ENCODE measurements at regions of chr12 and their contacts with region 1.

Region 1: GRCh38 chr12:22046090-22046967 is at the start of gene CMAS:
- DNase-seq: peak; percentile 53 to 65
- ATAC-seq: peak; percentile 88 to 92
- H3K4me3 ChIP-seq: peak within 1 kb of the TSS; percentile 94 to 100 (median 97)
- H3K27ac ChIP-seq: peak within 1 kb of the TSS; percentile 93 to 97 (median 94)
- H3K4me1 ChIP-seq: peaks cover 2 to 17% of the 10 kb centered on the region in 2 donors
- H3K27me3 ChIP-seq: no peaks in the 10 kb centered on the region
- CTCF ChIP-seq: no peak
- POLR2A ChIP-seq: peak; percentile 60 to 61
- total RNA-seq, gene CMAS: 28.2 to 33.4 (median 29.8) TPM

Region 2: GRCh38 chr12:21962236-21962635 is 84.1 kb before region 1 on chr12:
- in situ Hi-C with region 1: no loop called
- intact Hi-C with region 1: no loop called
- DNase-seq: no peak
- ATAC-seq: no peak
- H3K4me3 ChIP-seq: no peak overlapping the region
- H3K27ac ChIP-seq: no peak overlapping the region
- H3K4me1 ChIP-seq: no peaks in the 10 kb centered on the region
- H3K27me3 ChIP-seq: no peaks in the 10 kb centered on the region
- CTCF ChIP-seq: no peak
- POLR2A ChIP-seq: no peak

Region 3: GRCh38 chr12:22255097-22255496 is 208.8 kb after region 1 on chr12:
- in situ Hi-C with region 1: no loop called
- intact Hi-C with region 1: no loop called
- DNase-seq: no peak
- ATAC-seq: no peak
- H3K4me3 ChIP-seq: no peak overlapping the region
- H3K27ac ChIP-seq: no peak overlapping the region
- H3K4me1 ChIP-seq: no peaks in the 10 kb centered on the region
- H3K27me3 ChIP-seq: no peaks in the 10 kb centered on the region
- CTCF ChIP-seq: no peak
- POLR2A ChIP-seq: no peak

Region 4: GRCh38 chr12:22544038-22544979 is 498.0 kb after region 1 on chr12 and contains the start of gene C2CD5:
- in situ Hi-C with region 1: no loop called
- intact Hi-C with region 1: loop called (anchors 10 kb)
- DNase-seq: peak; percentile 92 to 97
- ATAC-seq: peak; percentile 95 to 96
- H3K4me3 ChIP-seq: peak within 1 kb of the TSS; percentile 64 to 97 (median 92)
- H3K27ac ChIP-seq: peak within 1 kb of the TSS; percentile 86 to 95 (median 92)
- H3K4me1 ChIP-seq: peaks cover 12 to 20% of the 10 kb centered on the region in 2 donors
- H3K27me3 ChIP-seq: no peaks in the 10 kb centered on the region
- CTCF ChIP-seq: peak in 4 of 5 experiments; percentile 9 to 34 (median 23)
- POLR2A ChIP-seq: peak; percentile 64 to 74
- total RNA-seq, gene C2CD5: 5.3 to 9.4 (median 6.9) TPM

Region 5: DNA sequence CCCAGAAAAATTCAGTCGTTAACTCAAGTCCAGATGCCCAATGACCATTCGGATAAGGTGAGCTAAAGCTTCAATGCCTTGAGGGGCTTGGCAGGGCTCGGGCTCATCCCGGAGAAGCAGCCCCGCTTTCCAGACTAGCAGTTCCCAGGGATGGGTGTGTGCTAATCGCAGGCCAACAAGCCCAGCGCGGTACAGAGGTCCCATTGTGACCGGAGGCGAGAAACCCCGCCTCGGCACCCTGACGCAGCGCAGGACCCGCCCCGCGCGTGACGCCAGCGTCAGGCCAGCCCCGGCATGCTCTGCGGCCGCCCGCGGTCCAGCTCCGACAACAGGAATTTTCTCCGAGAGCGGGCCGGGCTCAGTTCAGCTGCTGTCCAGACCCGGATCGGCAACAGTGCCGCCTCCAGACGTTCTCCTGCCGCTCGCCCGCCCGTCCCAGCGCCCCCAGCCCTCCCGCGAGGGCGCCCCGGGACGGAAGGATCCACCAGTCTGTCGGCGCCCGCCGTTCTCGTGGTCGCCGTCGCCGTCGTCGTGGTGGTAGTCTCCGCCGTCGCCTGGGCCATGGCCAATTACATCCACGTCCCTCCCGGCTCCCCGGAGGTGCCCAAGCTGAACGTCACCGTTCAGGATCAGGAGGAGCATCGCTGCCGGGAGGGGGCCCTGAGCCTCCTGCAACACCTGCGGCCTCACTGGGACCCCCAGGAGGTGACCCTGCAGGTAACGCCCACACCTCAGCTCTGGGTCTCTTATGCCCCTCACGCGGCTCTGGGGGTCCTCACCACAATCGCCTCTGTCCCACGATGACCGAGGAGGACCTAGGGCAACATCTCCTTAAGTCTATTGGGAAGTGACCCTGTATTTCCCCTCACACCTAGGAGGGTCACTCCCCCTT is 578.8 kb after region 1 on chr12 and contains the start of gene ETNK1:
- in situ Hi-C with region 1: loop called in 1 of 4 experiments (anchors 25 kb)
- intact Hi-C with region 1: no loop called
- DNase-seq: peak; percentile 89 to 90
- ATAC-seq: peak; percentile 94 to 96
- H3K4me3 ChIP-seq: peak within 1 kb of the TSS; percentile 86 to 98 (median 91)
- H3K27ac ChIP-seq: peak within 1 kb of the TSS; percentile 95 to 99 (median 98)
- H3K4me1 ChIP-seq: peaks cover 28 to 34% of the 10 kb centered on the region in 2 donors
- H3K27me3 ChIP-seq: no peaks in the 10 kb centered on the region
- CTCF ChIP-seq: no peak
- POLR2A ChIP-seq: peak; percentile 93 to 96
- total RNA-seq, gene ETNK1: 6.5 to 15.1 (median 7.2) TPM

Measured in gastrocnemius medialis (tissue), 4 donors.